Mammary epithelial cell (primary cell): ENCODE measurements at regions of chr12 and their contacts with region 1.

Region 1: GRCh38 chr12:72574138-72574537 is 302.0 kb downstream of the TRHDE start:
- DNase-seq: no peak
- H3K4me3 ChIP-seq: no peak overlapping the region
- H3K27ac ChIP-seq: no peak overlapping the region
- H3K4me1 ChIP-seq: no peaks in the 10 kb centered on the region
- H3K27me3 ChIP-seq: no peaks in the 10 kb centered on the region
- CTCF ChIP-seq: no peak

Region 2: DNA sequence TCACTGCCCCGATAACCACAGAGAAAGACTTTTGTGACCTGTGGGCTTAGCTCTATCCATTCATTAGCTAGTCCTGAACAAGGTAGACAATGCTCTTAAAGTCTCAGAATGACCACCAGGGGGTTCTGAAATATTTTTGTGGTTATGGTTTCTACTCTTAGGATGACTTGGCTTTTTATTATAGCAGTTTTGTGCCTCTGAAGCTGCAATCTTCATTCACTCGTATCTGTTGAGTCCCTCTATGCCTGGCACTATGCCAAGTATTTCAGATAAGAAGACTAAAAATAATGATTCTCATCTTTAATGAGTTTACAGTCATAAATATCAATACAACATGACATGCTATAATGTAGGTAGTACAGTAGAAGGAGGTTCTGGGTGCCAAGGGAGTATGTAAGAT is 432.8 kb before region 1 on chr12:
- CTCF ChIA-PET with region 1: no interaction called
- dilution Hi-C with region 1: no loop called
- in situ Hi-C with region 1: no loop called
- intact Hi-C with region 1: no loop called
- DNase-seq: peak; percentile 24
- H3K4me3 ChIP-seq: no peak overlapping the region
- H3K27ac ChIP-seq: no peak overlapping the region
- H3K4me1 ChIP-seq: no peaks in the 10 kb centered on the region
- H3K27me3 ChIP-seq: no peaks in the 10 kb centered on the region
- CTCF ChIP-seq: peak; percentile 20 to 27

Region 3: GRCh38 chr12:72540811-72541210 is 33.3 kb before region 1 on chr12:
- CTCF ChIA-PET with region 1: no interaction called
- dilution Hi-C with region 1: no loop called
- in situ Hi-C with region 1: no loop called
- intact Hi-C with region 1: no loop called
- DNase-seq: peak; percentile 20
- H3K4me3 ChIP-seq: no peak overlapping the region
- H3K27ac ChIP-seq: no peak overlapping the region
- H3K4me1 ChIP-seq: no peaks in the 10 kb centered on the region
- H3K27me3 ChIP-seq: no peaks in the 10 kb centered on the region
- CTCF ChIP-seq: no peak

Region 4: GRCh38 chr12:72610854-72611358 is 36.8 kb after region 1 on chr12:
- CTCF ChIA-PET with region 1: no interaction called
- dilution Hi-C with region 1: no loop called
- in situ Hi-C with region 1: no loop called
- intact Hi-C with region 1: loop called (anchors 1 kb)
- DNase-seq: no peak
- H3K4me3 ChIP-seq: no peak overlapping the region
- H3K27ac ChIP-seq: no peak overlapping the region
- H3K4me1 ChIP-seq: no peaks in the 10 kb centered on the region
- H3K27me3 ChIP-seq: no peaks in the 10 kb centered on the region
- CTCF ChIP-seq: no peak